Activated naive CD4-positive, alpha-beta T cell treated with anti-CD3 and anti-CD28 coated beads for 36 hours (primary cell): ENCODE measurements at regions of chr17 and their contacts with region 1.

Region 1: GRCh38 chr17:29640413-29640812 is 17.7 kb upstream of the CORO6 start:
- DNase-seq: no peak
- H3K4me3 Mint-ChIP-seq: no peak overlapping the region
- H3K27ac Mint-ChIP-seq: peak overlapping the region; percentile 82
- H3K4me1 Mint-ChIP-seq: peaks cover 38% of the 10 kb centered on the region
- H3K27me3 Mint-ChIP-seq: no peaks in the 10 kb centered on the region

Region 2: DNA sequence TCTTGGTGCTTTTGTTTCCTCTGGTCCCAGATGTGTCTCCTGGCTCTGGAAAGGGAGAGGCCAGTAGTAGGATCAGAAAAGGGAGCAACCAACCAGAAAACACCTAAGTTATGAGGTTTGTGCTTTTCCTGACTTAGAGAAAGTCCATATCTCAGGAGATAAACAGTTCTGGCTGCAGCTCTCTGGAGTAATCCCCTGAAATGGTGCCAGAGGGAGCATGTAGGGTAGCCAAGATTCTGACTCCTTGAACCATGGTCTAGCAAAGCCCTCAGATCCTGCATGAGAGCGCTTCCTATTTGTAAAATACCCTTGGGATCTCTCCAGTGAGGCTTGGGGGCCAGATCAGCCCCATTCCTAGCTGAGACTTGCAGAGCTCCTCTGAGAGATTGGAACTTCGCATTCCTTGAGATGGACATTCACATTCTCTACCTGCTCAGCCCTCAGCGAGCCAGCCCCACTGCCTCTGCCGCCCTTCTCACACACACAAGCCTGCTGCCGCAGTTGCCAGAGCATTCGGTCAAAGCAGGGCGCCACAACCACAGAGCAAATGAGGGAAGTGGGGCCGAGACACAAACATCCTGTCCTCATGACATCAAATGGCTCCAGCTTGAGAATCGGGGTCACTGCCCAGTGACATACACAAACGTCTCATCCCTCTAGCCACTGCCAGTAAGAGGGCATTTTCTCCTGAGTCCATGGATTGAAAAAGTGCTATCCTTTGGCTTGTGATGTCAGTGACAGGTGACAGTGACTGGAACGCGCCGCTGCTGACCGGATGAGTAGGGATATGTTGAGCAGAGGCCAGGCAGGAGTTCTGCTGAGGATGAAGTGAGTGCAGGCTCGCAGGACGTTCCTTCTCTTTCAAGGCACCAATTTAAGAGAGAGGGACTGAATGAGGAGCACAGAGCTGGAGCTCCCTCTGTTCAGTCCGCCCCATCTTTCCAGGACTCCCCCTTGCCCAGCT is 78.6 kb before region 1 on chr17:
- CTCF ChIA-PET with region 1: no interaction called
- intact Hi-C with region 1: no loop called
- DNase-seq: no peak
- H3K4me3 Mint-ChIP-seq: no peak overlapping the region
- H3K27ac Mint-ChIP-seq: no peak overlapping the region
- H3K4me1 Mint-ChIP-seq: peaks cover 17% of the 10 kb centered on the region
- H3K27me3 Mint-ChIP-seq: no peaks in the 10 kb centered on the region

Region 3: DNA sequence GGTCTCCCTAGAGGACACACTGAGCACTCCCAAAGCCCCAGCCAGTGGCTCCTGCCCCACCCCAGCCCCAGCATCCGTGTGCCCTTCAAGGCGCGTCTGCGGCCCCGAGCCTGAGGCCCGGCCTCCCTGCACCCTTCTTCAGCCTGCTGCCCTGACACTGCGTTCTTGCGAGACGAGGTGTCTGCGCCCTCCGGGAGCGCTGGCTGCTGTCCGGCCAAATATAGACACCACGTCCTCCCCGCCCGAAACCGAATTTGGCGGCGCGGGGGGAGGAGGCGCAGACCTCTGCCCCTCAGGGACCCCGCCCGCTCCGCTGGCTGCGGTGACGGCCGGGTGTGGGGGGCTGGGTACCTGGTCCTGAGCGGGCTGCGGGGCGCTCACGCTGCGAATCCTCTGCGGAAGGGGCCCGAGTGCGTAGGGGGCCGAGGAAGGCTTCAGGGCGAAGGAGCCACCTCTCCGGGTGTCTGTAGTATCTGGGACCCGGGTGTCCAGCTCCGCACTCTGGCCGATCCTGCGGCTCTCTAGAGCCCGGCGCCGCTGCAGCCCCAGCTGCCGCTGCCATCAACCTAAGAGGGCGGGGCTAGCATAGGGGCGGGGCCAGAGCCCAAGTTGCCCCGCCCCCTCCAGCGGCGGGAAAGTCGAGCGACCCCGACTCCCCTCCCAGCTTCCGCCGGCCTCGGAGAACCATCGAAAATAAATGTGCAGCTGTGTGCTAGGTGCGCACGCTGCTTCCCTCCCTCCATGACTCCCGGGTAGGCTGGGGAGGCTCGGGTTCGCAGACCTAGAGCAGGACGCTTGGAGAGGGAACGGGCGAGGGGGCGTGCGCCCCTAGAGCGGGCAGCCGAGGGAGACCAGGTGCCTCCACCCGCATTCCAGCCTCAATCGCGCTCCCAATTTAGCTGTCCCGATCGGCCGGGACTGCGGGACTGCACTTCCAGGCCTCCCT is 17.8 kb before region 1 on chr17 and contains the start of gene CORO6:
- CTCF ChIA-PET with region 1: interaction called, 40 read pairs
- intact Hi-C with region 1: loop called (anchors 1 kb)
- DNase-seq: peak; percentile 75
- H3K4me3 Mint-ChIP-seq: peak within 1 kb of the TSS; percentile 79
- H3K27ac Mint-ChIP-seq: peak within 1 kb of the TSS; percentile 96
- H3K4me1 Mint-ChIP-seq: peaks cover 57% of the 10 kb centered on the region
- H3K27me3 Mint-ChIP-seq: no peaks in the 10 kb centered on the region
- total RNA-seq, gene CORO6: 24.8 to 27.3 TPM

Region 4: DNA sequence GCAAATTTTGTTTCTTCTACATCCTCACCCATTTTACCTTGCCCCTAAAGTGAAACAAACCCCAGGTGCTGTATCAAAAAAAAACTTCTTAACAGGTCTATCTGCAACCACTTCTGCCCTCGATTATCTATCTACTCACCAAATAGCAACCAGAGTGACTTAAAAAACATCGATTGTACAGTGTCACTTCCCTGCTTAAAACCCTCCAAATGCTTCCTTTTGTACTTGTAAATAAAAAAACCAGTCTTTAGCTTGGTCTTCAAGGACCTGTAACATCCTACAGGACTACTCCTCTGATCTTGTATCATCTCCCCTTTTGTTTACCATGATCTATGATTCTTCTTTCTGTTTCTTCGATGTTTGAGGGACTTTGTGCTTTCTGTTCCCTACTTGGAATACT is 65.0 kb after region 1 on chr17:
- CTCF ChIA-PET with region 1: interaction called, 19 read pairs
- intact Hi-C with region 1: no loop called
- DNase-seq: no peak
- H3K4me3 Mint-ChIP-seq: peak overlapping the region; percentile 55
- H3K27ac Mint-ChIP-seq: peak overlapping the region; percentile 96
- H3K4me1 Mint-ChIP-seq: peaks cover 46% of the 10 kb centered on the region
- H3K27me3 Mint-ChIP-seq: no peaks in the 10 kb centered on the region

Region 5: GRCh38 chr17:29972277-29972676 is 331.9 kb after region 1 on chr17:
- CTCF ChIA-PET with region 1: no interaction called
- intact Hi-C with region 1: no loop called
- DNase-seq: no peak
- H3K4me3 Mint-ChIP-seq: no peak overlapping the region
- H3K27ac Mint-ChIP-seq: no peak overlapping the region
- H3K4me1 Mint-ChIP-seq: no peaks in the 10 kb centered on the region
- H3K27me3 Mint-ChIP-seq: no peaks in the 10 kb centered on the region

Region 6: DNA sequence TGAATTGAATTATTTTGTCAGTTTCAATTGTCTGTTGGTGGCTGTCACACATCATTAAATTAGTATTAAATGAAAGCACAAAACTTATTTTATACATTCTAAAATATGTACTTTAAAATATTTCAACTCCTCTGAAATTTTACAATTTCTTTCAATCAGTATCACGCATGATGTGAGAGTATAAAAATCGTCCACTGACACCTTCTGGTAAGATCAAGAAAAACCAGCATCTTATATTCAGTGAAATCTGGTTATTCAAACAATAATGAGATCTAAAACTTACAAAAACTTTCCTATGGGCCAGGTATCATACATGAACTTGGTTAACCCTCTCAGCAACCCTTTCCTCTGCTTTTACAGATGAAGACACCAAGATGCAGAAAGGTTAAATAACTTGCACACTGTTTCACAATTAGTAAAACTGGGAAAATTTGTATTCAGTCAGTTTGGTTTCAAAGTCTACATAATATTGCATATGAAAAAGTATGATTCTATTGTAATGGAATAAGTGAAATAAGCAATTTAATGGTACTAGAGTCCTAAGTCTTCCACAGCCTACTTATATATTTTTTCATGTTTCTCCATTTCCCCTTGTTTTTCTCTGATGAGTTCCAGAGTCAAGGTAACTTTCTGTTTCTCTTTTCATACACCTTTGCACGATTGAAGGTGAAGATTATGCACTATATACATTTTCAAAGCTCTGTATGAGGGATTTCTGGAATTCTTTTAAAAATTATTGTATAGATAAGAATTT is 359.8 kb after region 1 on chr17:
- CTCF ChIA-PET with region 1: no interaction called
- intact Hi-C with region 1: loop called (anchors 5 kb)
- DNase-seq: no peak
- H3K4me3 Mint-ChIP-seq: no peak overlapping the region
- H3K27ac Mint-ChIP-seq: no peak overlapping the region
- H3K4me1 Mint-ChIP-seq: peaks cover 13% of the 10 kb centered on the region
- H3K27me3 Mint-ChIP-seq: no peaks in the 10 kb centered on the region

Region 7: DNA sequence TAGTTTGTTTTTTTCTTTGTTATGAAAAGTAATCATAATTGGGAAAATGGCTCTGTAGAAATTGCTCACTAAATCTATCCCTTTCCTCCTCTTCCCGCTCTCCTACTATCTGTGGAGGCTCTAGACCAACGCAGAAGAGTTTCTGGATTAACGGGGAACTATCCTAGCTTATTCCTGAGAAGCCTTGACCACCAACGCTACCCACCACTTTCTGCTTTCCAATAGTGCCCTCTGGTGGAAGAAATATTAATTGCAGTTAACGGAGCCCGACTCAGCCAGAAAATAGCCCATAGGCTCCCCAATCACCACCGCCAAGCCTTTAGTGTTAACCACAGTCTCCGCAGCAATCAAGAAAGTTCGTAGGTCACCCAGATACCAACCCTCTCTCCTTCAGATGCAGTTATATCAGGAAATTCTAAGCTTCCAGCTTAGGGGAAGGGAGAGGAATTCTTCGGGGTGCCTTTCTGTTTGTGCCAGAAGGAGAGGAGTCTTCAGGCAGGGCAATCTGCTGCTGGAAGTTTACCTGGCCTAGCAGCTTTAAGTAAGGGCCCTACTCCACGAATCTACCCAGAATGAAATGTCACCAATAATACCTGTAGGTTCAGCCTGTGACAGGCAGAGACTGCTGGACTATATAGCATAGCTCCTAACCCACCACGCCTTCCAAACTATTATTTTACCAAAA is 453.2 kb after region 1 on chr17:
- CTCF ChIA-PET with region 1: no interaction called
- intact Hi-C with region 1: loop called (anchors 5 kb)
- DNase-seq: peak; percentile 56
- H3K4me3 Mint-ChIP-seq: no peak overlapping the region
- H3K27ac Mint-ChIP-seq: no peak overlapping the region
- H3K4me1 Mint-ChIP-seq: peaks cover 3% of the 10 kb centered on the region
- H3K27me3 Mint-ChIP-seq: peaks cover 9% of the 10 kb centered on the region